Endothelial cell of umbilical vein (primary cell): ENCODE measurements at regions of chr10 and their contacts with region 1.

Region 1: GRCh38 chr10:35126530-35127296 is at the start of gene CREM:
- DNase-seq: peak; percentile 97
- H3K4me3 ChIP-seq: peak within 1 kb of the TSS; percentile 65 to 85 (median 83)
- H3K27ac ChIP-seq: peak within 1 kb of the TSS; percentile 98
- H3K4me1 ChIP-seq: peaks cover 20% of the 10 kb centered on the region
- H3K27me3 ChIP-seq: no peaks in the 10 kb centered on the region
- CTCF ChIP-seq: peak; percentile 42 to 86
- POLR2A ChIP-seq: peak; percentile 92
- total RNA-seq, gene CREM: 34.8 and 35.5 TPM in 2 replicates

Region 2: DNA sequence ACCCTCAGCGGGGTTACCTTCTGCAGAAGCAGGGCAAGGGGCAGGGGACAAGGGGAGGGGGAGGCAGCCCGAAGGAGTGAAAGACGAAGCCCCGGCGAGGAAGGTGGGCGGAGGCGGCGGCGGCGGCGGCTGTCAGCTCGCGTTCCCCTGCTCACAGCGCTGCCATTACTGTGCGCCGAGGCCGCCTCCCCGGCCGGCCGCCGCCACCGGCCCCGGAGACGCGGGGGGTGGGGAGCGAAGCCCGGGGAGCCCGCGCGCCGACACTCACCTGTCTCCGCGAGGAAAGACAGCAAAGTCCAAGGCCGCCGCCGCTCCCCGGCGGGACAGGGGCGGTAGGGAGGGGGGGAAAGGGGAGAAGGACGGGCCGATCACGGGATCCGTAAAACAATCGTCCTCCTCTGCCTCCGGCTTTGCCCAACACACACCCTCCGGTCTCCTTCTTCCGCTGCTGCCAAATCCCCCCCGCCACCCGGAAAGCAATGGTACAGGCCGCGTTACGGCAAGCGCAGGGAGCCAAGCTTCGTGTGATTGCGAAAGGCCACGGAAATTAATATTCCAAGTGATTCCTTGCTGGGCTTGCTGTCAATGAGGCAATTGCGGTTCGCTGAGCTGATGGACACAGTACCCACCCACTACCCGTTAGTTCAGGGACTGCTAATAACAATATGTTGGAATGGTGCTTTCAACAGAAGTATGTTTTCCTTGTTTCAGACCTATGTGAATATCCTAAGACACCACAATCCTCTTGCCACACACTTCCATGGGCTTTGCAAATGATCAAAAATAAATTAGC is 36.4 kb before region 1 on chr10 and contains the start of gene CUL2:
- CTCF ChIA-PET with region 1: interaction called, 3 read pairs
- POLR2A ChIA-PET with region 1: no interaction called
- dilution Hi-C with region 1: no loop called
- intact Hi-C with region 1: loop called (anchors 1 kb)
- DNase-seq: peak; percentile 95
- H3K4me3 ChIP-seq: peak within 1 kb of the TSS; percentile 75 to 98 (median 93)
- H3K27ac ChIP-seq: peak within 1 kb of the TSS; percentile 71
- H3K4me1 ChIP-seq: peaks cover 13% of the 10 kb centered on the region
- H3K27me3 ChIP-seq: no peaks in the 10 kb centered on the region
- CTCF ChIP-seq: no peak
- POLR2A ChIP-seq: peak; percentile 50
- total RNA-seq, gene CUL2: 45.3 and 47.5 TPM in 2 replicates

Region 3: GRCh38 chr10:35202050-35202449 is 75.3 kb after region 1 on chr10:
- CTCF ChIA-PET with region 1: interaction called, 141 read pairs
- POLR2A ChIA-PET with region 1: no interaction called
- dilution Hi-C with region 1: loop called (anchors 25 kb)
- intact Hi-C with region 1: no loop called
- DNase-seq: no peak
- H3K4me3 ChIP-seq: no peak overlapping the region
- H3K27ac ChIP-seq: no peak overlapping the region
- H3K4me1 ChIP-seq: no peaks in the 10 kb centered on the region
- H3K27me3 ChIP-seq: no peaks in the 10 kb centered on the region
- CTCF ChIP-seq: no peak
- POLR2A ChIP-seq: no peak

Region 4: DNA sequence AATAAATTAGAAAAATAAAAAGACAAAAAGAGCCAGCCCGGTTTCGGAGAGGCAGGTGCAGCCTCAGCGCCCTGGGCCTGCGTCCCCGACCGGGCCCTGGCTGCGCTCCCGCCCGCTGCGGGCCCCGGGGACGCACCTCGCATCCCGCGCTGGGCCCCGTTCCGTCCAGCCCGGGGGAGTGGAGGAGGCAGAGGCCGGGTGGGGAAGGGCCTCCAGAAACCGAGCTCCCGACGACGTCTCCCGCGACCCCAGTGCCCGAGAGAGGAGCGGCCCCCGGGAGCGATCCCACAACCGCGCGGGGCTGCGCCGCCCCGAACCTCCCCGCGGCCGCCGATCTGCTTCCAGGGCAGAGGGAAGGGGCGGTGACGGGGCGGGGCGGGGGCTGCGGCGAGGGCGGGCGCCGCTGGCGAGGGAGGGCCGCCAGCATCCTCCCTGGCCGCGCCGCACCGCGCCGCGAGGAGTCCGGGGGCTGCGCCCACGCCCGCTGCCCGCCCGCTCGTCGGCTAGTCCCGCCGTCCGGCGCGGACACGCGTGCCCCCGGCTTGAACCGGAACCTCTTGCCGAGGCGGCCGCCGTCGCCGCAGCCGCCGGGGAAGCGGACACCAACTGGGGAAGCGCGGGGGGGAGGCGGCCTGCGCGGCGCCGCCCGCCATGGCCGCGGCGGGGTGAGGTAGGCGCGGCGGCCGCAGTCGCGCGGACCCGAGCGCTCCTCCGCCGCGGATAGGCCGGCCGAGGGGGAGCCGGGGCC is 209.5 kb after region 1 on chr10 and contains the start of gene CCNY:
- CTCF ChIA-PET with region 1: no interaction called
- POLR2A ChIA-PET with region 1: no interaction called
- dilution Hi-C with region 1: no loop called
- intact Hi-C with region 1: loop called (anchors 5 kb)
- DNase-seq: peak; percentile 67
- H3K4me3 ChIP-seq: peak within 1 kb of the TSS; percentile 72 to 97 (median 94)
- H3K27ac ChIP-seq: peak within 1 kb of the TSS; percentile 63
- H3K4me1 ChIP-seq: peaks cover 45% of the 10 kb centered on the region
- H3K27me3 ChIP-seq: no peaks in the 10 kb centered on the region
- CTCF ChIP-seq: no peak
- POLR2A ChIP-seq: peak; percentile 62
- total RNA-seq, gene CCNY: 99.3 and 107 TPM in 2 replicates

Region 5: DNA sequence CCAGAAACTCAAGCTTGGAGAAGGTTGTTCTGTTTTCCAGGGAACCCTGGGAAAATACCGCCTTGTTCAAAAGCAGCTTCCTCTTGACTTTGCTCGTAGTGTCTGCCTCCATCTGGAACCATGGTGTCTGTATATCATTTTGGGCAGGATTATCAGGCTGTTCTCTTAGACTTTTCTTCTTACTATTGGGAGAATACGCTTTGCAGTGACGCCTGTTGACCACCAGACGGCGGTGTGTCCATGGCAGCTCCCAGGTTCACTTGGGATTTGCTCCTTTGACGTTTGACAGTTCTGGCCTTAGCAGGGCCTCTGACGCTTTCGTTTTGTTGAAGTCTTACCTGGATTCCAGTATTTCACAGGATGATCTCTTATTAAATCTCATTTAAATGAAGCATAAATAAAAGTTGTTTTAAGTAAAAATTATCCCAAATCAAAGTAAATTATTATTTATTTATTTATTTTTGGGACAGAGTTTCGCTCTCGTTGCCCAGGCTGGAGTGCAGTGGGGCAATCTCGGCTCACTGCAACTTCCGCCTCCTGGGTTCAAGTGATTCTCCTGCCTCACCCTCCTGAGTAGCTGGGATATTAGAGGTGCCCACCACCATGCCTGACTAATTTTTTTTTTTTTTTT is 436.7 kb after region 1 on chr10:
- CTCF ChIA-PET with region 1: interaction called, 32 read pairs
- POLR2A ChIA-PET with region 1: no interaction called
- dilution Hi-C with region 1: no loop called
- intact Hi-C with region 1: loop called (anchors 10 kb)
- DNase-seq: peak; percentile 78
- H3K4me3 ChIP-seq: no peak overlapping the region
- H3K27ac ChIP-seq: no peak overlapping the region
- H3K4me1 ChIP-seq: peaks cover 12% of the 10 kb centered on the region
- H3K27me3 ChIP-seq: no peaks in the 10 kb centered on the region
- CTCF ChIP-seq: peak; percentile 97 to 100
- POLR2A ChIP-seq: no peak

Region 6: GRCh38 chr10:35843524-35844181 is 716.9 kb after region 1 on chr10:
- CTCF ChIA-PET with region 1: no interaction called
- POLR2A ChIA-PET with region 1: no interaction called
- dilution Hi-C with region 1: no loop called
- intact Hi-C with region 1: no loop called
- DNase-seq: peak; percentile 94
- H3K4me3 ChIP-seq: no peak overlapping the region
- H3K27ac ChIP-seq: no peak overlapping the region
- H3K4me1 ChIP-seq: no peaks in the 10 kb centered on the region
- H3K27me3 ChIP-seq: no peaks in the 10 kb centered on the region
- CTCF ChIP-seq: no peak
- POLR2A ChIP-seq: no peak

Region 7: DNA sequence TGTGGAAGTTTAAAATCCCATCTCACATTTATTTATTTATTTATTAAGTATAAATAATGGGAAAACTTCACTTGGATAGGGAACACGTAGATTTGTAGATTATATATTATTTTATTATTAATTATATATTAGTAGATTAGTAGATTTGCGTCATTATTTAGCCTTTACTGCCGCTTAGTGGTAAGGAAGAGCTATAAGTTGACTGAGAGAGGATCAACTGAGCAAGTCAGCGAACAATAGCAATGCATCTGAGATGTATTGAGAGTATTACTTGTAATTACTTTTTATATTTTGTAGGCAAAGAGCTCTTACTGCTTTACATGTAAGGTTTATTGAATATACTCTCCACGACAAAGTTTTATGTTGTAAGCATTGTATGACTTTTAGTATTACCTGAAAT is 1754.2 kb after region 1 on chr10:
- CTCF ChIA-PET with region 1: no interaction called
- POLR2A ChIA-PET with region 1: no interaction called
- dilution Hi-C with region 1: no loop called
- intact Hi-C with region 1: loop called (anchors 5 kb)
- DNase-seq: peak; percentile 20
- H3K4me3 ChIP-seq: no peak overlapping the region
- H3K27ac ChIP-seq: no peak overlapping the region
- H3K4me1 ChIP-seq: no peaks in the 10 kb centered on the region
- H3K27me3 ChIP-seq: peaks cover 0 to 4% of the 10 kb centered on the region in 2 experiments
- CTCF ChIP-seq: peak; percentile 14 to 48
- POLR2A ChIP-seq: no peak